ENCODE measurements at regions of chr14 and their contacts with region 1.

Region 1: GRCh38 chr14:78714711-78715110 is 544.5 kb downstream of the NRXN3 start:
- DNase-seq: no peak
- H3K4me3 ChIP-seq: no peak overlapping the region
- H3K27ac ChIP-seq: no peak overlapping the region
- H3K4me1 ChIP-seq: no peaks in the 10 kb centered on the region
- H3K27me3 ChIP-seq: no peaks in the 10 kb centered on the region
- CTCF ChIP-seq: no peak
- POLR2A ChIP-seq: no peak

Region 2: GRCh38 chr14:79472562-79472961 is 757.9 kb after region 1 on chr14:
- intact Hi-C with region 1: loop called (anchors 5 kb)
- DNase-seq: no peak
- H3K4me3 ChIP-seq: no peak overlapping the region
- H3K27ac ChIP-seq: no peak overlapping the region
- H3K4me1 ChIP-seq: no peaks in the 10 kb centered on the region
- H3K27me3 ChIP-seq: no peaks in the 10 kb centered on the region
- CTCF ChIP-seq: no peak
- POLR2A ChIP-seq: no peak

Measured in vagina (tissue), 2 donors.